ENCODE measurements at regions of chr5 and their contacts with region 1.

Region 1: GRCh38 chr5:151740336-151740942 is 18.0 kb downstream of the ATOX1 start:
- DNase-seq: peak in 1 of 2 donors; percentile 93
- H3K4me3 ChIP-seq: peak overlapping the region in 1 of 2 donors; percentile 7
- H3K27ac ChIP-seq: peak overlapping the region; percentile 81
- H3K4me1 ChIP-seq: peaks cover 46% of the 10 kb centered on the region
- H3K27me3 ChIP-seq: no peaks in the 10 kb centered on the region
- CTCF ChIP-seq: peak; percentile 95 to 98 (median 96)
- POLR2A ChIP-seq: no peak

Region 2: GRCh38 chr5:151447174-151448037 is 293.0 kb before region 1 on chr5 and contains the start of gene SLC36A1:
- intact Hi-C with region 1: loop called (anchors 5 kb)
- DNase-seq: peak in 1 of 2 donors; percentile 95
- H3K4me3 ChIP-seq: peak within 1 kb of the TSS; percentile 55 to 82
- H3K27ac ChIP-seq: peak within 1 kb of the TSS; percentile 77
- H3K4me1 ChIP-seq: peaks cover 13% of the 10 kb centered on the region
- H3K27me3 ChIP-seq: no peaks in the 10 kb centered on the region
- CTCF ChIP-seq: peak; percentile 91 to 99 (median 95)
- POLR2A ChIP-seq: no peak
- total RNA-seq, gene SLC36A1: 10.8 TPM

Region 3: GRCh38 chr5:151602806-151603205 is 137.6 kb before region 1 on chr5:
- intact Hi-C with region 1: no loop called
- DNase-seq: no peak
- H3K4me3 ChIP-seq: no peak overlapping the region
- H3K27ac ChIP-seq: no peak overlapping the region
- H3K4me1 ChIP-seq: no peaks in the 10 kb centered on the region
- H3K27me3 ChIP-seq: no peaks in the 10 kb centered on the region
- CTCF ChIP-seq: no peak
- POLR2A ChIP-seq: no peak

Region 4: GRCh38 chr5:151659001-151659754 is 81.3 kb before region 1 on chr5:
- intact Hi-C with region 1: loop called (anchors 1 kb)
- DNase-seq: no peak
- H3K4me3 ChIP-seq: no peak overlapping the region
- H3K27ac ChIP-seq: peak overlapping the region; percentile 85
- H3K4me1 ChIP-seq: peaks cover 26% of the 10 kb centered on the region
- H3K27me3 ChIP-seq: no peaks in the 10 kb centered on the region
- CTCF ChIP-seq: peak; percentile 65 to 93 (median 93)
- POLR2A ChIP-seq: no peak

Region 5: GRCh38 chr5:151770383-151771258 is 30.2 kb after region 1 on chr5:
- intact Hi-C with region 1: loop called (anchors 1 kb)
- DNase-seq: peak in 1 of 2 donors; percentile 91
- H3K4me3 ChIP-seq: peak overlapping the region; percentile 59 to 83
- H3K27ac ChIP-seq: peak overlapping the region; percentile 94
- H3K4me1 ChIP-seq: peaks cover 37% of the 10 kb centered on the region
- H3K27me3 ChIP-seq: no peaks in the 10 kb centered on the region
- CTCF ChIP-seq: no peak
- POLR2A ChIP-seq: no peak